Dendritic cell treated with granulocyte-macrophage colony-stimulating factor and Interleukin-4, amounts not matched to agents 40 ng/mL and 50 ng/mL, for 4 days (primary cell): ENCODE measurements at regions of chr16 and their contacts with region 1.

Region 1: GRCh38 chr16:31899505-31899904 is 25.9 kb downstream of the ZNF267 start:
- H3K4me3 Mint-ChIP-seq: no peak overlapping the region
- H3K27ac Mint-ChIP-seq: no peak overlapping the region
- H3K4me1 Mint-ChIP-seq: peaks cover 10% of the 10 kb centered on the region
- H3K27me3 Mint-ChIP-seq: no peaks in the 10 kb centered on the region

Region 2: GRCh38 chr16:31842864-31843263 is 56.6 kb before region 1 on chr16:
- intact Hi-C with region 1: loop called (anchors 10 kb)
- H3K4me3 Mint-ChIP-seq: no peak overlapping the region
- H3K27ac Mint-ChIP-seq: no peak overlapping the region
- H3K4me1 Mint-ChIP-seq: no peaks in the 10 kb centered on the region
- H3K27me3 Mint-ChIP-seq: no peaks in the 10 kb centered on the region

Region 3: DNA sequence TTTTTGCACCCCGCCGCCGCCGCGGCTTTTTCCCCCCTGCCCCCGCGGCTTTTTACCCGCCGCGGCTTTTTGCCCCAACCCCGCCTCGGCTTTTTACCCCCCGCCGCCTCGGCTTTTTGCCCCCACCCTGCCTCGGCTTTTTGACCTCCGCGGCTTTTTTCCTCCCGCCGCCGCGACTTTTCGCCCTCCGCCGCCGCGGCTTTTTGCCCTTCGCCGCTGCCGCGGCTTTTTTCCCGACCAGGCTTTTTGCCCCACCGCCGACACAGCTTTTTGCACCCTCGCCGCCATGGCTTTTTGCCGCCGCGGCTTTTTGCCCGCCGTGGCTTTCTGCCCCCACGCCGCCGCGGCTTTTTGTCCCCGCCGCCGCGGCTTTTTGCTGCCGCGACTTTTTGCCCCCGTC is 216.6 kb after region 1 on chr16:
- intact Hi-C with region 1: no loop called
- H3K4me3 Mint-ChIP-seq: peak overlapping the region; percentile 82
- H3K27ac Mint-ChIP-seq: no peak overlapping the region
- H3K4me1 Mint-ChIP-seq: peaks cover 4% of the 10 kb centered on the region
- H3K27me3 Mint-ChIP-seq: peaks cover 14% of the 10 kb centered on the region